ENCODE measurements at regions of chr13 and their contacts with region 1.

Region 1: DNA sequence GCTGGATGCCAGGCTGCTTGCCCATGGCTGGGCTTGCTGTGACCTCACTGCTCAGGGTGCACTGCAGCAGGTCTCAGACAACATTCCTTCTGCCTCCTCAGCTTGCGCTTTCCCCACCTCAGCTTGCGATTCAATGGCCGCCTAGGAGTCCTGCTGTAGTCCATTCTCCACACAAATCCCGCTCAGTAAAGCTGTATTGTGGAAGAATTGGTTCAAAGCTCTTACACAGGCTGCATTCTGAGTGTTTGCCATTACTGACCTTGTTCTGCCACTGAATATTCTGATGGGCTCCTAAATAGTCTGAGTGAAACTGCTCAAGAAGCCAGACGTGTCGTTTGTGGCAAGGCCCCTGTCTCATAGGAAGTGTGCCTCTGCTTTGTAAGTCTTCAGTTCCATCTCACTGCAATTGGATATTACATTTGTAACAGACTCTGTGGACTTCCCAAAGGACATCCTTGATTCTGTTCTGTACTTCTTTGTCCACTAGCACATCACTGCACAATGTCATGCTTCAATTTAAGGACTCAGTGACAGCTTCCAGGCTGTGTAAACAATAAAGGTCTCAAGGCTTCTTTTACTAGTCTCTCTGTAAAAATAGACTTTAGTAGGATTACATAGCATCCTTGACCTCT is 49.8 kb downstream of the KATNAL1 start:
- DNase-seq: peak; percentile 54
- H3K4me3 ChIP-seq: peak overlapping the region; percentile 42
- H3K27ac ChIP-seq: peak overlapping the region; percentile 60
- H3K4me1 ChIP-seq: peaks cover 28% of the 10 kb centered on the region
- CTCF ChIP-seq: no peak

Region 2: DNA sequence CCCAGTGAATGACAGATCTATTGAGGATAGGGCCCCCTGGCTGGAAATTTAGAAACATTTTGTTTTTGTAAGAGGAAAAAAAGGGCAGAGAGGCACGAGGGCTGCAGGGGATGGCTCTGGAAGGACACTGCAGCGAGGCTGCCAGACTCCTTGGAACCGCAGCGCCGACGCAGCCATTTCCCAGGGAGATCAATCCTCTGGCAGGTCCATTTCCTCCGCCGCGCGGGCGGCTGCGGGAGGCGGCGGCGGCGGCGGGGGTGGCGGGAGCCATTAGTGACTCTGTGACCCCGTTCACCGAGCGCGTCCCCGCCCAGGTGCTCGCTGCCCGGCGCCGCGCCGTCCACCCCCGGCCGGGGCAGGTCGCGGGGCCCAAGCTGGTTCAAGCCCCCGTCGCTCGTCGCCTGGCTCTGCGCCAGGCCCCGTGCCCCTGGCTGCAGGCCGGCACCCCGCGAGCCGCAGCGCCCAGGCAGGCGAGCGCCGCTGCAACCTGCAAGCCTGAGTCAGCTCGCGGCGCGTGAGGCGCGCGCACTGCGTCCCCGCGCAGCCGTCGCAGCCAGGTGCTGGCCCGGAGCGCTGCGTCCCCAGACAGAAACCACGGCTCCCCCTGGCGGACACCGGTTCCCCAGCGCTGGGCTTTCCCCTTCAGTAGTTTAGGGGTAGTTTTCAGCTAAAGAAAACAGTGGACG is 142.9 kb before region 1 on chr13:
- CTCF ChIA-PET with region 1: no interaction called
- POLR2A ChIA-PET with region 1: no interaction called
- intact Hi-C with region 1: no loop called
- DNase-seq: peak; percentile 90
- H3K4me3 ChIP-seq: peak overlapping the region; percentile 71
- H3K27ac ChIP-seq: no peak overlapping the region
- H3K4me1 ChIP-seq: peaks cover 9% of the 10 kb centered on the region
- CTCF ChIP-seq: peak; percentile 90

Region 3: GRCh38 chr13:30241532-30241931 is 16.1 kb before region 1 on chr13:
- CTCF ChIA-PET with region 1: no interaction called
- POLR2A ChIA-PET with region 1: interaction called, 11 read pairs
- intact Hi-C with region 1: no loop called
- DNase-seq: no peak
- H3K4me3 ChIP-seq: no peak overlapping the region
- H3K27ac ChIP-seq: no peak overlapping the region
- H3K4me1 ChIP-seq: no peaks in the 10 kb centered on the region
- CTCF ChIP-seq: no peak

Region 4: GRCh38 chr13:30334663-30335386 is 77.2 kb after region 1 on chr13:
- CTCF ChIA-PET with region 1: no interaction called
- POLR2A ChIA-PET with region 1: interaction called, 4 read pairs
- intact Hi-C with region 1: loop called (anchors 2 kb)
- DNase-seq: peak; percentile 60
- H3K4me3 ChIP-seq: peak overlapping the region; percentile 58
- H3K27ac ChIP-seq: peak overlapping the region; percentile 98
- H3K4me1 ChIP-seq: peaks cover 80% of the 10 kb centered on the region
- CTCF ChIP-seq: peak; percentile 85

Region 5: DNA sequence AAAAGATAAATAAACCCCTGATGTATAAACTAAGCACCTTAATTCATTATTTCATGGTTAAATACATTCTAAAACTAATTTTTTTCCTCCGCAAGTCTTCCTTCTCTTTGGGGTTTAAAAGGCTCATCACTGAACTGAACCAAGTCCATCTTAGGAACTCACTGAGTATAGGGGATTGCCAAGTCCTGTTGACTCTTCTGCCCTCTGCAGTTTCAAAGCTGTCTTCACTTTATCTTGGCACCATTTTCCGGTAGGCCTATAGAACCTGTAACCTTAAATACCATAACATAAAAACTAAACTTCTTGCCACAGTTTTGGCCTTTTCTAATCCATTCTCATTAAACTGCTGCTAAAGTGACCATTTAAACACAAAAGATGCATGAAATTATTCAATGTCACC is 293.6 kb after region 1 on chr13:
- CTCF ChIA-PET with region 1: no interaction called
- POLR2A ChIA-PET with region 1: no interaction called
- intact Hi-C with region 1: loop called (anchors 1 kb)
- DNase-seq: peak; percentile 83
- H3K4me3 ChIP-seq: no peak overlapping the region
- H3K27ac ChIP-seq: no peak overlapping the region
- H3K4me1 ChIP-seq: peaks cover 25% of the 10 kb centered on the region
- CTCF ChIP-seq: peak; percentile 93

Measured in OCI-LY7 (cell line).